Sciatic nerve (tissue), 2 donors: ENCODE measurements at regions of chr7 and their contacts with region 1.

Region 1: DNA sequence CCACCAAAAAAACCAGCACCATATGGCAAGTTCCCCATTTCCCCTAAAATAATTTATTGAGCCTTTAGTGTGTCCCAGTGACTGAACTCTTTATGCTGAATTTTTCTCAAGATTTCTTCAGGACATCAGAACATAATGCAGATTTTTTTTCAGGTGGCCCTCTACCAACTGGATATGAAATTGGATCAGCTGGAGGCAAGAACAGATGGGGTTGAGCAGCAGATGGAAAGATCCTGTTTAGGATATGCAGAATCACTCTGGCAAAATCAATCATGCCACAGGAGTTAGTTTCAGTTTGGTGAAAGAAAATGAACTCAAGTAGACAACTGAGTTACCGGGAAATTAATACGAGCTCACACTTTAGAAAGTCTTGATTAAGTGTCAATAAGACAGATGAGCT is 761.5 kb upstream of the C7orf33 start:
- DNase-seq: no peak
- ATAC-seq: no peak

Region 2: GRCh38 chr7:147878912-147879661 is 50.1 kb after region 1 on chr7:
- intact Hi-C with region 1: loop called (anchors 2 kb)
- DNase-seq: no peak
- ATAC-seq: no peak

Region 3: DNA sequence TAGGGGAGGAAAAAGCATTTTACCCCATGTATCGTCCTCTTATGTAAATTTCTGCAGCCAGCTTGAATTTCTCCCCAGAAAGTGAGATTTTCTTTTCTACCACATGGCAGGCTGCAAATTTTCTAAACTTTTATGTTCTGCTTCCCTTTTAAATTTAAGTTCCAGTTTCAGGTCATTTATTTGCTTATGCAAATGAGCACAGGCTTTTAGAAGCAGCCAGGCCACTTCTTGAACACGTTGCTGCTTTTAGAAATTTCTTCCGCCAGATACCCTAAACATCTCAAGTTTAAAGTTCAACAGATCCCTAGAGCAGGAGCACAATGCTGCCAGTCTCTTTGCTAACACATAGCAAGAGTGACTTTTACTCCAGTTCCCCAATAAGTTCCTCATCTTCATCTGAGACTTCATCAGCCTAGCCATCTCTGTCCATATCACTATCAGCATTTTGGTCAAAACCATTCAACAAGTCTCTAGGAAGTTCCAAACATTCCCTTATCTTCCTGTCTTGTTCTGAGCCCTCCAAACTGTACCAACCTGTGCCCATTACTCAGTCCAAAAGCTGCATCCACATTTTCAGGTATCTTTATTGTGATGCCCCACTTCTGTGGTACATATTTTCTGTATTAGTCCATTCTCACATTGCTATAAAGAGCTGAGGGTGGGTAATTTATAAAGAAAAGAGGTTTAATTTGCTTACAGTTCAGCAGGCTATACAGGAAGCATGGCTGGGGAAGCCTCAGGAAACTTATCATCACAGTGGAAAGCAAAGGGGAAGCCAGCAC is 1038.8 kb after region 1 on chr7:
- intact Hi-C with region 1: no loop called
- DNase-seq: no peak
- ATAC-seq: no peak